ENCODE measurements at regions of chr16 and their contacts with region 1.

Region 1: GRCh38 chr16:10918294-10919002 is 23.8 kb downstream of the DEXI start:
- DNase-seq: peak; percentile 92
- ATAC-seq: peak; percentile 72

Region 2: GRCh38 chr16:10828851-10829731 is 89.4 kb before region 1 on chr16:
- intact Hi-C with region 1: loop called (anchors 10 kb)
- DNase-seq: peak; percentile 98
- ATAC-seq: peak; percentile 86

Region 3: DNA sequence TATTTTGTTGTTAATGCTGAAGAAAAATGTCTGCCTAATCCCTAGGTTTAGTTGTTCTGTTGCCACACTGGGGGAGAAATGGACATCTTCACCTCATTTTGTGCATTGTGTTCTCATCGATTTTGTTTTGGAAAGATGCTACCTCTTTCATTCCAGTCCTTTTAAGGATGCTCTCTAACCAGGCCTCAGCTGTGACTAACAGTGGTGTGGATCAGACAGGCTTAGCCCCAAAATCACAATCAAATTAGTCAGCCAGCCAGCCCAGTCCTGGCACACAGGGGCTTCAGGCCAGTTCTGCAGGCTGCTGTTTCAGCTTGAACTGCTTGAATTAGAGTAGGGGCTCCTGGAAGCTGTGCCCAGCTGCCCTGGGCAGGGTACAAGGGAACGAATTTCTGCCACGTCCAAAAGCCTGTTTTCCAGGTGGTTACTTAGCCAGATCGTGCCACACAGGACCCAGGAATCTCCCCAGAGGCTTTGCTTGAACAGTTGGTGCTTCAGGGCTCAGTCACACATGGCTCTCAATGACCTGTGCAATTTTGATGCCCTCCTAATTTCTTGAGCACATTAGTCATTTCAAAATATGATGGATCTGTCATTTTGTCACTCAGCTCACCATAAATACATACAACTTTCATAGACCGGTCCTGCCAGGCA is 86.6 kb after region 1 on chr16:
- intact Hi-C with region 1: no loop called
- DNase-seq: no peak
- ATAC-seq: no peak

Measured in left ventricle myocardium superior (tissue), 1 donor.